ENCODE measurements at regions of chr13 and their contacts with region 1.

Region 1: GRCh38 chr13:80342471-80343380 is 1.8 kb upstream of the SPRY2 start:
- DNase-seq: peak; percentile 72 to 91 (median 80)
- H3K4me3 ChIP-seq: peak overlapping the region; percentile 53 to 99 (median 91)
- H3K27ac ChIP-seq: peak overlapping the region in 58 of 59 donors; percentile 85 to 100 (median 97)
- H3K27me3 ChIP-seq: no peaks in the 10 kb centered on the region
- CTCF ChIP-seq: peak; percentile 89 to 100 (median 97)

Region 2: DNA sequence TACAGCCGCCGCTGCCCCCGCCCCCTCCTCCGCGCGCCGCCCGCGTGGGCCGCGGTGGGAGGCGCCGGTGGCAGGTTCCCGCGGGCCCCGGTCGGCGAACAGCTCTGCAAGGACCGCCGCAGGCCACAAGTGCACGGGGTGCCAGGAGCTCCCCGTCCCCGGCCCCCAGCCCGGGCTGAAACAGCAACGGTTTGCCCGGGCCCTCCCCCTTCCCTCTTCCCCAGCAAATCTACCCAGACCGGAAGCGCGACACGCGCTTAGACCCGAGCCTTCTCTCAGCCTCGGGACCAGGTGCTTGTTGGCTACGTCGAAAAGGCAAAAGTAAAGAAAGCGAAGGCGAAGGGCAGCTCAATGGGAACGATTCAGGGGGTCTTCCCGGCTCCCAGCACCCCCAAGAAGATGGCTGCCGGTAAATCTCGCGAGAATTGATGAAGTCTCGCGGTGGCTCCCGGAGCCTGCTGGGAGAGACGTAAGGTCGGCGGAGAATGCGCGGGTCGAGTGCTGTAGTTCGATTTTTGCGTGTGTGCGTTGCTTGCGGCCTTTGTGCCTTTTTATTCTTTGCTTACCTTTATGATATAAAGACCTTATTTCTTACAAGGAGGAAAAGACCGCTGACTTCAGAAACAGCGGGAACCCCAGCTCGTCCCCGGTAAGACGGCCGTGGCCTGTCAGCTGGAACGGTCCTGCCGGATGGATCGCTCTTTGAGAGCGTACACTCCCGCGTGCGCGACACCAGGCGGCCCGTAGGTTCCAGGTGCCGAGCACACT is 936.7 kb before region 1 on chr13 and contains the start of gene RBM26:
- intact Hi-C with region 1: loop called in 1 of 2 experiments (anchors 10 kb)
- DNase-seq: peak; percentile 76 to 89 (median 88)
- H3K4me3 ChIP-seq: peak within 1 kb of the TSS; percentile 64 to 98 (median 88)
- H3K27ac ChIP-seq: peak within 1 kb of the TSS; percentile 74 to 98 (median 95)
- H3K27me3 ChIP-seq: no peaks in the 10 kb centered on the region
- CTCF ChIP-seq: peak in 29 of 56 donors; percentile 0 to 50 (median 21)
- total RNA-seq, gene RBM26: 53.5 to 90.2 (median 73.7) TPM

Region 3: DNA sequence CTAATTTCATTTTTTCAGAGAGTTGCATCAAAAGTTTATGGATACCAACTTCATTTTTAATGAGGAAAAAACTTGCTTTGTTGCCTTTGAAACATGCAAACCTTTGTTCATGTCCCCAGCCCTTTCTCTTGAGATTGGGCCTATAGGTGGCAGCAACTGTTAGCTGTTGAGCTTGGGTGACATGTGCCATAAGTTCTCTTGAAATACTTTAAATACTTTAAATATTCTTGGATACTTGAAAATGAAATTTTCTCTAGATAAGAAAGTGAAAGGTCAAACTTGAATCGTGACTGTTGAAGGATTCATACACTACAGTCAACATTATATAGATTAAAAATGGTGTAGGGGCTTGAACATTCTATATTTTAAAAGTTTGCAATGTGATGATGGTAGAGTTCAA is 566.9 kb before region 1 on chr13:
- intact Hi-C with region 1: loop called in 1 of 2 experiments (anchors 5 kb)
- DNase-seq: peak in 5 of 10 donors; percentile 40 to 68 (median 50)
- H3K4me3 ChIP-seq: no peak overlapping the region
- H3K27ac ChIP-seq: no peak overlapping the region
- H3K27me3 ChIP-seq: no peaks in the 10 kb centered on the region
- CTCF ChIP-seq: peak in 55 of 56 donors; percentile 52 to 83 (median 72)

Region 4: GRCh38 chr13:79936368-79937136 is 406.2 kb before region 1 on chr13:
- intact Hi-C with region 1: loop called (anchors 1 to 2 kb)
- DNase-seq: peak in 9 of 10 donors; percentile 40 to 78 (median 56)
- H3K4me3 ChIP-seq: peak overlapping the region in 34 of 59 donors; percentile 2 to 45 (median 21)
- H3K27ac ChIP-seq: peak overlapping the region; percentile 69 to 98 (median 95)
- H3K27me3 ChIP-seq: no peaks in the 10 kb centered on the region
- CTCF ChIP-seq: peak in 5 of 56 donors; percentile 10 to 31 (median 21)

Region 5: DNA sequence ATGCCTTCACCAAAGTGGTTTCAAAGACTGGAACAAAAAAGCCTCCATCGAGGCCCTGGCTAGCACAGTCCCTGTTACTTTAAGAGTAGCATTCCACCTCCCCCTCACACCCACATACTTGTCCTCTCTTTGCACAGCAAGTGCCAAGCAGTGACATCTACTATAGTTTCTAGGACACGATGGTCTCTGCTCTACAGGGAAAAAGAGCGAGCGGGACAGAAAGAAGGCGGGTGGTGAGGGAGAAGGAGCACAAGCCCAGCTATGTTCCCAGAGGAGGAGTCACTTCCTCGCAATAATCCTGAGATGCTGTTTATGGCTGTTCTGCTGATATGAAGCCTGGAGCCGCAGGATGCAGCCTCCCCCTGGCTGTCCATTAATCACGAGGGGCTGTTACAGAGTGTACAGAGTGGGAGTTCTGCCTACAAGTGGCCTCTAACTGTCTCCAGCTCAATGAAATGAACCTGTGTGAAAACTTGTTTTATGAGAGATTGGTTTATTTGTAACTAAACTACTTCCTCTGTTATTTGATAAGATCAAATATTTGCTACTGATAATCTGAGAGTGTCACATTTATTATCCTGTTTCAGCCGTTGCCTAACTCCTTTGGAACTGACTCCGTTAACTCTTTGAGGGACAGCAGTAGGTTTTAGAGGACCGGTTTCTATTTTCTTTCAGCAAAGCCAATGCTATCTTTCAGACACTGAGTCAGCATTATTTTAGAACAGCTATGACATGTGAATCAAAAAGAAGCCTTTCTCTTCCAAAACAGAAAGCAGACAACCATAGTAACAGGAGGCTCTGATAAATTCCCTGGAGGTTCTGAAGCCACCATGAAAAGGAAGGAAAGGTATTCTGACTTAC is 209.8 kb before region 1 on chr13:
- intact Hi-C with region 1: loop called (anchors 2 kb)
- DNase-seq: peak; percentile 25 to 86 (median 68)
- H3K4me3 ChIP-seq: peak overlapping the region in 58 of 59 donors; percentile 9 to 65 (median 44)
- H3K27ac ChIP-seq: peak overlapping the region; percentile 73 to 98 (median 95)
- H3K27me3 ChIP-seq: no peaks in the 10 kb centered on the region
- CTCF ChIP-seq: peak in 9 of 56 donors; percentile 4 to 24 (median 22)

Region 6: GRCh38 chr13:80251403-80251802 is 91.3 kb before region 1 on chr13:
- intact Hi-C with region 1: no loop called
- DNase-seq: no peak
- H3K4me3 ChIP-seq: no peak overlapping the region
- H3K27ac ChIP-seq: no peak overlapping the region
- H3K27me3 ChIP-seq: no peaks in the 10 kb centered on the region
- CTCF ChIP-seq: no peak

Region 7: GRCh38 chr13:80894917-80895316 is 552.2 kb after region 1 on chr13:
- intact Hi-C with region 1: loop called in 1 of 2 experiments (anchors 5 kb)
- DNase-seq: no peak
- H3K4me3 ChIP-seq: no peak overlapping the region
- H3K27ac ChIP-seq: peak overlapping the region in 33 of 59 donors; percentile 3 to 85 (median 63)
- H3K27me3 ChIP-seq: no peaks in the 10 kb centered on the region
- CTCF ChIP-seq: no peak